T-cell (primary cell): ENCODE measurements at regions of chr16 and their contacts with region 1.

Region 1: DNA sequence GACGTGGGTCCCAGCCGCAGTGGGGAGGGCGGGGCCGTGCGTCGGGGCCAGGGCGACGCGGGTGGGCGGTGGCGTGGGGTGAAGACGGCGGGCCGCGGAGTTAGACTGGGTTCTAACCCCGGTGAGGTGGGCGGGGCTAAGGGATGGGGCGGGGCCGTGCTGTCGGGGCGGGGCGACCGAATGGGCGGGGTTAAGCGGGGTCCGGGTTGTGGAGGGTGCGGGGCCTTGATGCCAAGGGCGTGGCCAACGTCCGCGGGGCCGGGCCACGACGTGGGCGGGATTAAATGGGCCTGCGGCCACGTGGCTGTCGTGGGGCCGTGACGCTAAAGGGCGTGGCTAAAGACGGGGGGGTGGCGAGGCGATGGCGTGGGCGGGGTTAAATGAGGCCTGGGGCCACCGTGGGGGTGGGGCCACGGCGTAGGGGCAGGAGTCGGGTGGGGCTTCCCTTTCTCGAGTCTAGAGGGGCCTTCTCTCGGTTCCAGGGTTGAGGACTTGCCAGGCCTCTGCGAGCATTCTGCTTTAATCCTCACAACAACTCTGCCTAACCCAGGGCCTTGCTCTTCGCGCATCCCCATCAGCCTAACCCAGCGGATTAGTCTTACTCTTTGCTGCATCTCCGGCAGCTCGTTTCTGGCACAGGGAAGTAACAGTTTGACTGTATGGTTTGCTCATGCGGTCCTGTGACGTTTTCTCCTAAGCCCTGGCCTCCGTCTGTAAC is 739 bp downstream of the TCF25 start:
- DNase-seq: peak; percentile 80 to 97 (median 95)
- ATAC-seq: peak; percentile 72 to 84 (median 78)
- H3K4me3 ChIP-seq: peak overlapping the region; percentile 10 to 99
- H3K4me3 Mint-ChIP-seq: peak overlapping the region; percentile 86 to 92 (median 86)
- H3K27ac ChIP-seq: peak overlapping the region; percentile 100
- H3K27ac Mint-ChIP-seq: peak overlapping the region; percentile 95 to 96
- H3K4me1 ChIP-seq: peaks cover 4 to 27% of the 10 kb centered on the region in 2 experiments
- H3K4me1 Mint-ChIP-seq: peaks cover 23 to 25% (median 25%) of the 10 kb centered on the region in 3 donors
- H3K27me3 ChIP-seq: no peaks in the 10 kb centered on the region
- H3K27me3 Mint-ChIP-seq: no peaks in the 10 kb centered on the region

Region 2: DNA sequence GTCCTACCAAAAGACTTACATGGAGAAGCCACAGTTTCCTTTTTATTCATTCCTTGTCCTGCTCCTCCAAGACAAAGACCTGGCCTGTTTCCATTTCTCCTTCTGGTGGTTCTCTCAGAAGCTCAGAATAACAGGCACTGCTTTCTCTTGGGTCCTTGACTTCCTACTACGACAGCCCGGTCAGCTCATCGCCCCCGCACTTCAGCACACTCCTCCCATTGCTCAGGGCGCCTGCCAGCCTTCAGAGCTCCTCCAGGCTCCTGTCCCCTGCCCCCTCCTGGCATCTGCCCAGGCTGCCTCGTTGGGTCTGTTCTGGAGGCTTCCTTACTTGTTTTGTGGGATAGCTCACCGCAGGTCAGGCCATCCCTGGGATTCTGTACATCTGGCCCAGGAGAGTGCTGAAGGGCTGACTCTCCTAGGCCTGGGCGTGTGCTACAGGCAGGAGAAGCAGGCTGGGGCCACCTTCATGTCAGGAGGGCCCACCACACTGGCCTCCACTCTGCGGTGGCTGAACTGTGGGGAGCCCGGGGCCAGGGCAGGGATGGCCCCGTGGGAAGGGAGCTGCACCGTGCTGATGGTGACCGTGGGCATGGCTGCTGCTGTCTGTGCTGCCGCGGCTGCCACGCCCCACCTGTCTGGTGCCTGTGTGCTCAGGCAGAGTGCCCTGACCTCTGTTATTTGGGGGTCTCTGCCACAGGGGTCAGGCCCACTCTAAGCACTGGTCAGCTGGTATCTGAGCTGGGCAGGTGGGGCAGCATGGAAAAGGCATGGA is 16.9 kb after region 1 on chr16:
- CTCF ChIA-PET with region 1: no interaction called
- POLR2A ChIA-PET with region 1: interaction called in 1 of 2 experiments, 15 read pairs
- DNase-seq: no peak
- ATAC-seq: no peak
- H3K4me3 ChIP-seq: no peak overlapping the region
- H3K4me3 Mint-ChIP-seq: no peak overlapping the region
- H3K27ac ChIP-seq: no peak overlapping the region
- H3K27ac Mint-ChIP-seq: no peak overlapping the region
- H3K4me1 ChIP-seq: peaks cover 0 to 9% of the 10 kb centered on the region in 2 experiments
- H3K4me1 Mint-ChIP-seq: peaks cover 0 to 7% (median 6%) of the 10 kb centered on the region in 3 donors
- H3K27me3 ChIP-seq: no peaks in the 10 kb centered on the region
- H3K27me3 Mint-ChIP-seq: no peaks in the 10 kb centered on the region